ENCODE measurements at regions of chr9 and their contacts with region 1.

Region 1: GRCh38 chr9:129352146-129352865 is 174.2 kb upstream of the IER5L start:
- DNase-seq: peak; percentile 89
- ATAC-seq: peak; percentile 56
- H3K4me3 Mint-ChIP-seq: peak overlapping the region; percentile 81
- H3K27ac Mint-ChIP-seq: no peak overlapping the region
- H3K4me1 Mint-ChIP-seq: peaks cover 27% of the 10 kb centered on the region
- H3K27me3 Mint-ChIP-seq: peaks cover 12% of the 10 kb centered on the region
- CTCF ChIP-seq: no peak

Region 2: GRCh38 chr9:129333953-129334724 is 18.2 kb before region 1 on chr9:
- CTCF ChIA-PET with region 1: interaction called, 11 read pairs
- POLR2A ChIA-PET with region 1: interaction called, 10 read pairs
- DNase-seq: peak; percentile 91
- ATAC-seq: peak; percentile 82
- H3K4me3 Mint-ChIP-seq: peak overlapping the region; percentile 57
- H3K27ac Mint-ChIP-seq: peak overlapping the region; percentile 100
- H3K4me1 Mint-ChIP-seq: peaks cover 43% of the 10 kb centered on the region
- H3K27me3 Mint-ChIP-seq: 0 out of 2 replicates have a peak, but pooled peaks cover 4% of the 10 kb centered on the region
- CTCF ChIP-seq: no peak

Region 3: DNA sequence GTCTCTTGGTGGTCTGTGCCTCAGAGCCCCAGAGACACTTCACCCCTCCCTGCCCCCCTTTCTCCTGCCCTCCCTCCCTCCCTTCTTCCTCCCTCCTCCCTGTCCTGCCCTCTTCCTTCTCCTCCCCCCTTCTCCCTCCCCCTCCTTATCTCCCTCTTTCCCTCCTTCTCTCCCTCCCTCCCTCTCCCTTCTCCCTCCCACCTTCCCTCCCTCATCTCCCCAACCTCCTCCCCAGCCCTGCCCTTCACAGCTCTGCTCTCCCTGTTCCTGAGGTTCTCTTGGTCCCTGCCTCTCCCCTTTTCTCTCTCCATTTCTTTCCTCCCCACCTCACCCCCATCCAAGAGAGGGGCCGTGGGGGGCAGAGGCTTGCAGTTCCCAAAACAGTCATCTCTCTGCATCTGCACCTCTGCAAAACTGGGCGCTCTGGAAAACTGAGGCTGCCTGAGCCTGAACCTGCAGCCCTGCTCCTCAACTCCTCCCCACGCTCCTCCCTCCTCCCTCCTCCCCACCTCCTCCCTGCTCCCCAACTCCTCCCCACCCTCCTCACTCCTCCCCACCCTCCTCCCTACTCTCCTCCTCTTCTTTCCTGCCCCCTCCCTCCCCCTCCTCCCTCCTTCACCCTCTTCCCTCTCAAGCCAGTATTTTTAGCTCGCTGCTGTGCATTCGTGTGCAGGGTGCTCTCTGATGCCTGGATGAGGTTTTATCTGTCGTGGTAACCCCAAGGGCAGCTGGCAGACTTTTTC is 49.5 kb after region 1 on chr9:
- CTCF ChIA-PET with region 1: no interaction called
- POLR2A ChIA-PET with region 1: no interaction called
- DNase-seq: no peak
- ATAC-seq: no peak
- H3K4me3 Mint-ChIP-seq: peak overlapping the region; percentile 54; the same call in 1 of the 2 replicates
- H3K27ac Mint-ChIP-seq: no peak overlapping the region
- H3K4me1 Mint-ChIP-seq: peaks cover 59% of the 10 kb centered on the region
- H3K27me3 Mint-ChIP-seq: peaks cover 16% of the 10 kb centered on the region
- CTCF ChIP-seq: no peak

Region 4: DNA sequence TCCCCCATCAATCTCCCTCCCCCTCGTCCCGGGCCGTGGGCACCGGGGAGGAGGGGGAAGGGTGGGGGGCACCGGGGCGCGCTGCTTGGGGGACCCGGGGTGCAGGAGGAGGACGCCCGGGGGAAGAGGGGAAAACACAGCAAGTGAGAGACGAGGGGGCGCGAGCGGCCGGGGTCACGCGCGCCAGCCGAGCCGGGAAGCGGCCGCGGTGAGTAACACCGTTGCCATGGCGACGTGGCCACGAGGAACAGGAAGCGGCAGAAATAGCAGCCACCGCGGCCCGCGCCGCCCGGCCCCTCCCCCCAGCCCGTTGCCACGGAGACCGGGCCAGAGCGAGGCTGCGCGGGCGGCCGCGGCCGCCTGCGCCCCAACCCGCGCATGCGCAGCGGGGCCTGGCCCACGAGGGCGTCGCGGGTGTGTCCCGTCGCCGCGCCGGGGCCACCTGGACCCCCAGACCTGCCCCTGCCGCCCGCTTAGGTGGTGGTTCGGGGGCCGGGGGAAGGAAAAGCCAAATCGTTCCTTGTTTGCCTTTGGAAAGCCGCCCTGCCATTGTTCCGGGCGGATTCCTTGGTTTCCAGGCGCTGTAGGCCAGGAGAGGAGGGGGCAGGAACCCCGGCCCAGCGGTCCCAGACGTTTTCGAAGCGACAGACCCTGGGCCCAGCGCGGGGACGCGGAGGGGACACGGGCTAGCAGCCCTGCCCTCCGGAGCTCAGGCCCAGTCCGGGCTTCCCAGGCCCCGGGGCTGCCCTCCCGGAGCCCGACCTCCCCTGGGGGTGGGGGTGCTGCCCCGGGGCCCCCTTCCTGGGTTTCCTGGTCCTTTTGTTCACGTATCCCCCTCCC is 61.5 kb after region 1 on chr9:
- CTCF ChIA-PET with region 1: no interaction called
- POLR2A ChIA-PET with region 1: no interaction called
- DNase-seq: peak; percentile 97
- ATAC-seq: peak; percentile 81
- H3K4me3 Mint-ChIP-seq: peak overlapping the region; percentile 69
- H3K27ac Mint-ChIP-seq: peak overlapping the region; percentile 74
- H3K4me1 Mint-ChIP-seq: peaks cover 15% of the 10 kb centered on the region
- H3K27me3 Mint-ChIP-seq: peaks cover 5% of the 10 kb centered on the region
- CTCF ChIP-seq: no peak

Measured in WTC11 (cell line).